ENCODE measurements at regions of chr15 and their contacts with region 1.

Region 1: GRCh38 chr15:73697033-73697467 is 12.9 kb downstream of the CD276 start:
- DNase-seq: peak; percentile 38
- ATAC-seq: peak; percentile 93
- H3K4me3 ChIP-seq: no peak overlapping the region
- H3K27ac ChIP-seq: peak overlapping the region; percentile 4; the same call in 1 of the 2 replicates
- H3K4me1 ChIP-seq: peaks cover 10% of the 10 kb centered on the region
- H3K27me3 ChIP-seq: no peaks in the 10 kb centered on the region
- CTCF ChIP-seq: no peak
- EP300 ChIP-seq: peak in 1 of 2 experiments; percentile 17; a peak in 1 of 4 replicates
- POLR2A ChIP-seq: no peak
- RAD21 ChIP-seq: no peak

Region 2: DNA sequence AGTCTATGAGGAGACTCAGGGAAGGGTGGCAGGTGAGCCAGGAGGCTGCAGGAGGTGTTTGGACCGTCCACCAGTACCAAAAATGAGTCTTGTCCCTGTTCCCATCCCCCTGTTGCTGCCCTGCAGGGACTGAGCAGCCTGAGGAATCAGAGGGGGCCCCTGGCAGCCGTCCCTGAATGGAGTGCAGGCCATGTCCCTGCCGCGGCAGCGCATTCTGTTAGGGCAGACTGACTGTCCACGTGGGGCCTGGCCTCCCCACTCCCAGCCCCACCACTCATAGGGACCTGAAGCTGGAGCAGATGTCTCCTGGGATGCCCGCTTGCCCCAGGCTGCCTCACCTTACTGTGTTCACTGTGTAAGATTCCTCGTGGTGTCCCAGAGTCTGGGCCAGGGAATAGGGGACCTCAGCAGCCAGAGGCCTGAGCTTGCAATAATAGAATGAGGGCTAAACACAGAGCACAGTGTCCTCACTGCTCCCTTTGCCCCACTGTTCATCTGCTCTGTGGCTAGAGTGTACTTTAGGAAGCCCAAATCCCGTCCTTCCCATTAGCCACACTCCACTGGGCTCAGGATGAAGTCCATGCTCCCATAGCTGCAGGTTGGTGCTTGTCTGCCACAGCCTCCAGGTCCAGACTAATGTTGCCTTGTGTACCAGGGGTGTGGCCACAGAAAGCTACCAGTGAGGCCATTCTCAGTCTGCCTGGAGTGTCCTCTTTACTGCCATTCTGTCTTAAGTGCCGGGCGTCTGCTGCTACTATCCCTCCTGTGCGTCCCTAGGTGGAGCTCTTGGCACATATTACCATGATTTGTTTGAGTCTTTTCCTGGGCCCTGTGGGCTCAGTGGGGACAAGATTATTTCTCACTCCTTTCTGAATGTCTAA is 391.5 kb before region 1 on chr15:
- CTCF ChIA-PET with region 1: interaction called, 3 read pairs
- POLR2A ChIA-PET with region 1: no interaction called
- RAD21 ChIA-PET with region 1: no interaction called
- SMC1A ChIA-PET with region 1: no interaction called
- in situ Hi-C with region 1: loop called (anchors 10 kb)
- intact Hi-C with region 1: loop called (anchors 2 kb)
- DNase-seq: no peak
- ATAC-seq: peak; percentile 87
- H3K4me3 ChIP-seq: no peak overlapping the region
- H3K27ac ChIP-seq: no peak overlapping the region
- H3K4me1 ChIP-seq: no peaks in the 10 kb centered on the region
- H3K27me3 ChIP-seq: no peaks in the 10 kb centered on the region
- CTCF ChIP-seq: peak; percentile 48 to 68 (median 67); a peak in 5 of 6 replicates
- EP300 ChIP-seq: no peak
- POLR2A ChIP-seq: no peak
- RAD21 ChIP-seq: peak; percentile 68

Region 3: GRCh38 chr15:73560501-73561117 is 136.4 kb before region 1 on chr15:
- CTCF ChIA-PET with region 1: interaction called, 34 read pairs
- POLR2A ChIA-PET with region 1: no interaction called
- RAD21 ChIA-PET with region 1: interaction called, 4 read pairs
- SMC1A ChIA-PET with region 1: interaction called, 3 read pairs
- in situ Hi-C with region 1: loop called (anchors 5 kb)
- intact Hi-C with region 1: loop called (anchors 1 kb)
- DNase-seq: peak; percentile 9
- ATAC-seq: peak; percentile 77
- H3K4me3 ChIP-seq: no peak overlapping the region
- H3K27ac ChIP-seq: no peak overlapping the region
- H3K4me1 ChIP-seq: no peaks in the 10 kb centered on the region
- H3K27me3 ChIP-seq: no peaks in the 10 kb centered on the region
- CTCF ChIP-seq: peak; percentile 31 to 57 (median 39); a peak in 5 of 6 replicates
- EP300 ChIP-seq: no peak
- POLR2A ChIP-seq: no peak
- RAD21 ChIP-seq: peak; percentile 80

Region 4: DNA sequence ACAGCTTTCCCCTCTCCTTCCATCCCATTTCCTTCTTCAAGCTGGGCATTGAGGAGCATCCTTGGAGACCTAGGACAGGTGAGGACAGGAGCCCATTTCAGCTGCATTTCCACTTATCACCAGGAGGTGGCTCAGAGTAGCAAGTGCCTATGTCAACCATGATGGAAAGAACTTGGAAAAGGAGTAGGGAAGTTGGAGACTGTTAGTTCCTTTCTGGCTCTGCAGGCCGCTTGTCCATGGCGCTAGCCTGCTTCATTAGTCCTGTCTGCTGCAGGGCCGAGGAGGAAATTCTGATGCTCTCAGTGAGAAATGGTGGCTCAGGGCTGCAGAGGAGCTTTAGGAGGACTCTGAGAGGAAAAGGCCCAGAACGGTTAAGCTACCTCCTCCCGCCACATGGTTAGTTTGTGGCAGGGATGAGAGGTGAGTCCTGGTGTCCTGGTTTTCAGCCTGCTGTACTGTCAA is 19.9 kb before region 1 on chr15:
- CTCF ChIA-PET with region 1: interaction called, 103 read pairs
- POLR2A ChIA-PET with region 1: no interaction called
- RAD21 ChIA-PET with region 1: interaction called, 19 read pairs
- SMC1A ChIA-PET with region 1: interaction called, 45 read pairs
- in situ Hi-C with region 1: no loop called
- intact Hi-C with region 1: loop called (anchors 1 kb)
- DNase-seq: no peak
- ATAC-seq: peak; percentile 78
- H3K4me3 ChIP-seq: no peak overlapping the region
- H3K27ac ChIP-seq: no peak overlapping the region
- H3K4me1 ChIP-seq: no peaks in the 10 kb centered on the region
- H3K27me3 ChIP-seq: peaks cover 2% of the 10 kb centered on the region in 2 experiments; a peak in 2 of 4 replicates
- CTCF ChIP-seq: peak; percentile 73 to 89 (median 82)
- EP300 ChIP-seq: no peak
- POLR2A ChIP-seq: no peak
- RAD21 ChIP-seq: peak; percentile 59

Region 5: DNA sequence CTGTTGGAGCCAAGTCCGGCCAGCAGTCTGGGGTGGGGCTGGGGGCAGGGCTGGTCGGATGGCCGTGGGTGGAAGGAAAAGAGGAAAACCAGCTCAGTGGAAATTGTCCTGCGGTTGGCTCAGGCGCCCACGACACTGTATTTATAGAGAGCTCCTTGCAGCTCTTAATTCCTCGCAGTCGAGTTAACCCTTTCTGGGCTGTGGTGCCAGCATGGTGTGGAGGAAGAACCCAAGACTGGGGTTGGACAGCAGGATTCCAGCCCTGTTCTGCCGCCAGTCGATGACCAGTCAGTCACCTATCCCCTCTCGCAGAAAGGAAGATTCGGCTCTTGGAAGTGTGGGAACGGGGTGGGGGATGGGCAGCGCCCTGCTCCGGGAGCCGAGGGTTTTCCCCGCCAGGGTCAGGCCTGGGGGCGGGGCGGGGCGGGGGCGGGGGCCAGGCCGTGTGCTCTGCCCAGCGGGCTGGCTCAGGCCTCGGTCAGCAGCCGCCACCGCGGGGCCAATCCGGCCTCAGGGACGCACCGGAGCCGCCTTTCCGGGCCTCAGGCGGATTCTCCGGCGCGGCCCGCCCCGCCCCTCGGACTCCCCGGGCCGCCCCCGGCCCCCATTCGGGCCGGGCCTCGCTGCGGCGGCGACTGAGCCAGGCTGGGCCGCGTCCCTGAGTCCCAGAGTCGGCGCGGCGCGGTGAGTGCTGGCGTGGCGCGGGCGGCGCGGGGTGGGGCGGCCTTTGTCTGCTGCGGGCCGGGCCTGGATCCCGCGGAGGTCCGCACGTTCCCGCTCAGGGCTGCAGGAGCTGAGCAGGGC is 13.1 kb before region 1 on chr15 and contains the start of gene CD276:
- CTCF ChIA-PET with region 1: interaction called, 103 read pairs
- POLR2A ChIA-PET with region 1: no interaction called
- RAD21 ChIA-PET with region 1: interaction called, 5 read pairs
- SMC1A ChIA-PET with region 1: interaction called, 45 read pairs
- in situ Hi-C with region 1: no loop called
- intact Hi-C with region 1: no loop called
- DNase-seq: no peak
- ATAC-seq: peak; percentile 47
- H3K4me3 ChIP-seq: peak within 1 kb of the TSS; percentile 32; the same call in 1 of the 2 replicates
- H3K27ac ChIP-seq: no peak within 1 kb of the TSS
- H3K4me1 ChIP-seq: no peaks in the 10 kb centered on the region
- H3K27me3 ChIP-seq: peaks cover 5 to 6% of the 10 kb centered on the region in 2 experiments; a peak in 3 of 4 replicates
- CTCF ChIP-seq: no peak
- EP300 ChIP-seq: no peak
- POLR2A ChIP-seq: 0 out of 2 replicates have a peak, but pooled peaks have one; percentile 25
- RAD21 ChIP-seq: no peak
- polyA plus RNA-seq, gene CD276: 0.11 to 0.20 TPM